HEK293 (cell line): ENCODE measurements at regions of chr1 and their contacts with region 1.

Region 1: GRCh38 chr1:10430216-10431069 is at the start of gene CENPS:
- H3K4me3 ChIP-seq: peak within 1 kb of the TSS; percentile 86
- H3K27ac ChIP-seq: peak within 1 kb of the TSS; percentile 85
- H3K4me1 ChIP-seq: no peaks in the 10 kb centered on the region
- CTCF ChIP-seq: peak; percentile 98

Region 2: DNA sequence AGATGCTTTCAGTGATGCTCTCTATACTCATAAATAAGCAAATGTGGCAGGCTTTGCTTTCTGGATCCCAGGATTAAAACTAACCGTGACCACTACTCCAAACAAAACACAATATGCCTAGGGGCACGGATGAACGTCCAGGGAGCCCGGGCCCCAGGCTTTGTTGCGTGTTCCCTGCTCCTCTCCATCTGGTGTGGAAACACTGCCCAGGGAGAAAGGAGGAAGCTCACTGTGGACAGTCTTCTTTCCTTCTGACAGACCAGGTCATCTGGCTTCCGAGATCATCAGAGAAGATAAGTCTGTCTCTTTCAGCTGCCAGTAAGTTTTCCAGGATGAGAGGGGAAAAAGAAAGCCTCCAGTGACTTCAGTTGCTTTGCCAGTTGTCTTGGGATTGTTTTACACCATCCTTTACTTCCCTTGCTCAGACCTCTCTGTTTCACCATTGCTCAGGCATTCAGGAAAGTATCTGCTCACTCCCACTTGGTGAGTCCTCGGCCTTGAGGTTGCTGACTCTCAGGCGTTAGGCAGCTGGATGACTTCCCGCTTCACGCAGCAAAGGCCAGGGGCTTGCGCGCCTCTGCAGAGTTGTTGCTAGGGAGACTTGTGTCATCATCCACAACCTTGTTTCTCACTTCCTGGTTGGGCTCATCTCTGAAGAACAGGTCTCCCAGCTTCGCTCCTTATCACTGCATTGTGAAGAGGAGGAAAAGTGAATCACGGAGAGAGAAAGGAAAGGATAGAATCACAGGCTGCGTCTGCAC is 52.2 kb before region 1 on chr1:
- CTCF ChIA-PET with region 1: interaction called, 14 read pairs
- POLR2A ChIA-PET with region 1: no interaction called
- H3K4me3 ChIP-seq: no peak overlapping the region
- H3K27ac ChIP-seq: no peak overlapping the region
- H3K4me1 ChIP-seq: no peaks in the 10 kb centered on the region
- CTCF ChIP-seq: no peak

Region 3: DNA sequence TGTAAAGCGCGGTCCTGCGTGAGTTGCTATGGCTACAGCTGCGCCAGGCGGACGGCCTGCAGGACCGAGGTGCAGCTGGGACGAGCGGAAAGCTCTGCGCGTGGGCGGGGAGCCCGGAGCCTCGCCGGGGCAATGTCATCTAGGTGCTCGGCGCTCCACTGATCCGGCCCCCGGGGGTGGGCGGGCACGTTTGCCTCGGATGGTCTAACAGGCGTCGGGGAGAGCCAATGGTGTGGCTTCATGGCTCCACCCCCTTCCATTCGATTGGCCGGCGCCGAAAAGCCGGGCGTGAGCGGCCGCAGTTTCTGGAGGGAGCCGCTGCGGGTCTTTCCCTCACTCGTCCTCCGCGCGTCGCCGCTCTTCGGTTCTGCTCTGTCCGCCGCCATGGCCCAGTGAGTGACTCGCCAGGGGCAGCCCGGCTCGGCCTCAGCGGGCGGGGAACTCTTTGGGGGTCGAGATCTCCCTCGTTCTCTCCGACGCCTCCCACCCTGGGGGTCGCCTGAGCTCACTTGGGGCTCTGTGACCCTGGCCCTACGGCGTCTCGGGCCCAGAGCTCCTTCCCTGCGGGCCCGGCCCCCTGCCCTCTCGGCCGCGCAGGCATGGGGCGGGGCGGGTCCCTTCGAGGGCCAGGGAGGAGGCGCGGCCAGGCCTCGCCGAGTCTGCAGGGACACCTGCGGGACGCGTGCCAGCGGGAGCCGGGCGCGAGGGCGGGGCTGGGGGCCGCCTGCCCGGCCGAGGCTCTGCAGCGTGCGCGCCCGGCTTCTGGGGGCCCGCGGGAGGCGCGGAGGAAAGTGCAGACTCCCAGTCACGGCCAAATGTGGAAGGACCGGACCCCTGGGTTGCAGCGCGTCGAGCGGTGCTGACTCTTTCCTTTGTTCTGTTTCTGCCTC is 31.5 kb before region 1 on chr1 and contains the start of gene PGD:
- CTCF ChIA-PET with region 1: interaction called, 5 read pairs
- POLR2A ChIA-PET with region 1: interaction called, 10 read pairs
- H3K4me3 ChIP-seq: peak within 1 kb of the TSS; percentile 62
- H3K27ac ChIP-seq: peak within 1 kb of the TSS; percentile 86
- H3K4me1 ChIP-seq: peaks cover 2% of the 10 kb centered on the region; the same call in 1 of the 2 replicates
- CTCF ChIP-seq: peak; percentile 82

Region 4: GRCh38 chr1:10451287-10451686 is 20.8 kb after region 1 on chr1:
- CTCF ChIA-PET with region 1: interaction called, 12 read pairs
- POLR2A ChIA-PET with region 1: interaction called, 4 read pairs
- H3K4me3 ChIP-seq: no peak overlapping the region
- H3K27ac ChIP-seq: no peak overlapping the region
- H3K4me1 ChIP-seq: no peaks in the 10 kb centered on the region
- CTCF ChIP-seq: no peak